Heart right ventricle (tissue), 16 donors: ENCODE measurements at regions of chr21 and their contacts with region 1.

Region 1: DNA sequence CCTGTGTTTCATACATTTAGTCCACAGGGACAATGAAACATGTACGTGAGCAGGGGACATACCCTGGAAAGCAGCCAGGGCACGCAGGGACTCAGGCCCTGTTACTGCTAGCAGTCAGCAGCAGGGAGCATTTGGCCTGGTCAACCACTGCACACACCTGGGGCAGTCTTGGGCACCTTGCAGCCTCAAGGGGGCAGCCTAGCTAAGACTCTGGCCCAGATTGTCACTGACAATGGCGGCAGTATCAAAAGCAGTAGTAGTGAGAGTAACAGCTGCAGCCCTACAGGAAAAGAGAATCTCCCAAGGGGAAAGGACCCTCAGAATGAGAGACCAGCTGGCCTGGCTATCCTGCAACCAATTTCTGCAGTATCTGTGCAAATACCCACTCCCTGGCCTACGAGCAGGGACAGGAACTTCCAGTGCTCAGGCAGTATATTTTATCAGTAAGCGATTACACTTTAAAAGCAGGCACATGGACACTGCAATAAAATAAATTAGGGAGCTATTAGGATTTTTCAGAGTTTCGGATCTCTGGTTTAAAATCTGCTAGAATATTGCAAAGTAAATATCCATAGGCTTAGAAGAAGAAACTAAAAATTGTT is 475.6 kb downstream of the LTN1 start:
- DNase-seq: peak; percentile 65 to 74
- ATAC-seq: peak; percentile 92 to 97 (median 95)
- H3K4me3 ChIP-seq: peak overlapping the region in 1 of 10 donors; percentile 11
- H3K27ac ChIP-seq: peak overlapping the region in 2 of 10 donors; percentile 4 to 53
- H3K4me1 ChIP-seq: peaks cover 0 to 34% (median 16%) of the 10 kb centered on the region in 9 donors
- H3K27me3 ChIP-seq: no peaks in the 10 kb centered on the region
- CTCF ChIP-seq: peak; percentile 53 to 86 (median 71)

Region 2: DNA sequence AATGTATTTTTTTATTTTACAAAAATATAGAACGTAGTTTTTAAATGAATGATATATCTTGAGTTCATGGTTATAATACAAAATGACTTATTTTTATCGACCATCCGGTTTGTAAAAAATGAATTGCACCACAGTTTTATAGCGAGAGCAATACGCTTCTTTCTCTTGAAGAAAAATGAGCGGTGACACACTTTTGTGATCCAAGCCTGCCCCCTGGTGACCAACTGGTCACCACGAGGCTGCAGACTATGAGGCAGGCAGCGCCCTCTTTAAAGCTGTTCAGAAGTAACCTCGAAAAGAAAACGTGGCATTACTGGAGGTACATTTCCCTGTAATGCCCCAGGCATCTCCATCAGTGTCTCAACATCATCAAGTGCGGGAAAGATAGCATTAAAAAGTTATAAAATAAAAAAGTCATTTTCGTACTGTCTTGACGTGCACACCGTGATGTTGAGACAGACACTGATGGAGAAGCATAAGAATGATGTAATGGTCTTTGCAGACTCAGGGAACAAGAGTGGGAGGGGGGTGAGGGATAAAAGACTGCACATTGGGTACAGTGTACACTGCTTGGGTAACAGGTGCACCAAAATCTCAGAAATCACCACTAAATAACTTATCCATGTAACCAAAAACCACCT is 816.0 kb before region 1 on chr21:
- intact Hi-C with region 1: loop called in 1 of 10 experiments (anchors 10 kb)
- DNase-seq: peak; percentile 77 to 88
- ATAC-seq: peak; percentile 76 to 95 (median 91)
- H3K4me3 ChIP-seq: peak overlapping the region in 1 of 10 donors; percentile 7
- H3K27ac ChIP-seq: no peak overlapping the region
- H3K4me1 ChIP-seq: peaks cover 0 to 21% (median 0%) of the 10 kb centered on the region in 9 donors
- H3K27me3 ChIP-seq: no peaks in the 10 kb centered on the region
- CTCF ChIP-seq: peak; percentile 76 to 95 (median 89)

Region 3: GRCh38 chr21:28336314-28336713 is 180.8 kb before region 1 on chr21:
- intact Hi-C with region 1: loop called in 3 of 10 experiments (anchors 5 to 10 kb)
- DNase-seq: peak in 1 of 2 donors; percentile 8
- ATAC-seq: peak in 5 of 8 donors; percentile 34 to 59 (median 41)
- H3K4me3 ChIP-seq: no peak overlapping the region
- H3K27ac ChIP-seq: peak overlapping the region in 3 of 10 donors; percentile 7 to 64 (median 36)
- H3K4me1 ChIP-seq: peaks cover 0 to 41% (median 26%) of the 10 kb centered on the region in 9 donors
- H3K27me3 ChIP-seq: no peaks in the 10 kb centered on the region
- CTCF ChIP-seq: peak; percentile 12 to 78 (median 51)

Region 4: GRCh38 chr21:28633839-28634555 is 116.9 kb after region 1 on chr21:
- intact Hi-C with region 1: loop called in 4 of 10 experiments (anchors 2 to 5 kb)
- DNase-seq: peak; percentile 32 to 68
- ATAC-seq: peak; percentile 73 to 95 (median 88)
- H3K4me3 ChIP-seq: peak overlapping the region in 1 of 10 donors; percentile 3
- H3K27ac ChIP-seq: peak overlapping the region; percentile 47 to 89 (median 80)
- H3K4me1 ChIP-seq: peaks cover 4 to 56% (median 30%) of the 10 kb centered on the region in 9 donors
- H3K27me3 ChIP-seq: no peaks in the 10 kb centered on the region
- CTCF ChIP-seq: no peak

Region 5: DNA sequence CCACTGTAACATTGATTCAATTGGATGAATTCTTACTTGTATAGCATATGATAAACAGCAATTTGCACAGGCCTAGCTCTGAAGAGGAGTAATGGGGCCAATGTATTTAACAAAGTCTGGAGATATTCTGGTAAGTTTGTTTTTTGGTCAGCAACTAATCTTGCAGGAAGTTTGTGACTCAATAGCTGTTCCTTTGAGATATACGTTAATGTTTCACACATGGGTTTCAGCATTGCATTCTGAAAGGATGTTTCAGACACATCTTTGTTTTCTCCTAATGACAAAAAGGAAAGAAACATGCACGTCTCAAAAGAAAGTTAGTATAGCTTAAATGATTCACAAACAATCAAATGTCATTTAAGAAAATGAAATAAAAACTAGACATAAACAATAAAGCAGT is 426.5 kb after region 1 on chr21:
- intact Hi-C with region 1: loop called in 1 of 10 experiments (anchors 10 kb)
- DNase-seq: no peak
- ATAC-seq: no peak
- H3K4me3 ChIP-seq: no peak overlapping the region
- H3K27ac ChIP-seq: no peak overlapping the region
- H3K4me1 ChIP-seq: peaks cover 0 to 11% (median 4%) of the 10 kb centered on the region in 9 donors
- H3K27me3 ChIP-seq: no peaks in the 10 kb centered on the region
- CTCF ChIP-seq: no peak